ENCODE measurements at regions of chr9 and their contacts with region 1.

Region 1: DNA sequence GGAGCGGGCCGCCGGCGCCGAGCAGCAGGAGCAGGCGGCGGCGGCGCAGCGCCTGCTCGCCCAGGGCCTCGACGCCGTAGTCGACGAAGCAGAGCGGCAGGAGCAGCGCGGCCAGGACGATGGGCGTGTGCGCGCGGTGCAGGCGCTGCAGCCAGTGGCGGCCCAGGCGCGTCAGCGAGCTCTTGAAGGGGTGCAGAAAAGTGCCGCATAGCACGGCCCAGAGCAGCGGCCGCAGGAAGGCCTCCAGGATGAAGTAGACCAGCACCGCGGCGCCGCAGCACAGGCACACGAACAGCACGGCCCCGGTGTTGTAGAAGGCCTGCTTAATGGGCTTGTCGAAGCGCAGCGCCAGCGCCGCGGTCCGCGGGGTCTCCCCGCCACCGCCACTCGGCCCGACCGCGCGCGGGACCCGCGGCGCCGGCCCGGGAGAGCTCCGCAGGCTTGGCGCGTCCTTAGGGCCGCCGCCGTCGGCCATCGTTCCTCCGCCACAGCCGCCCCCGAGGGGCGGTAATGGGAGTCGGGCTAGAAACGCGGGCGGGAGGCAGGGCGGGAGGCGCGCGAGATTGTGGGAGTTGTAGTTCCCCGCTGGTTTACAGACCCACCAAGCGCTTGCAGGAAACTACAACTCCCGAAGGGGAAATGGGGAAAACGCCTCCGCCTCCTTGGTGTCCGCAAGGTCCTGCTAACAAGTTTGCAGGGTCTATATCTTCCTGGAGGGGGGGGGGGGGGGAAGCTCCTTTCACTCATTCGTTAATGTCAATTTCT is at the start of gene TMEM245:
- DNase-seq: peak; percentile 96
- H3K4me3 ChIP-seq: peak within 1 kb of the TSS; percentile 68 to 90
- H3K27ac ChIP-seq: peak within 1 kb of the TSS; percentile 80 to 83
- H3K4me1 ChIP-seq: peaks cover 4% of the 10 kb centered on the region
- H3K27me3 ChIP-seq: no peaks in the 10 kb centered on the region
- CTCF ChIP-seq: peak in 2 of 4 experiments; percentile 16 to 30
- POLR2A ChIP-seq: peak; percentile 94
- total RNA-seq, gene TMEM245: 57.7 to 82.1 TPM

Region 2: DNA sequence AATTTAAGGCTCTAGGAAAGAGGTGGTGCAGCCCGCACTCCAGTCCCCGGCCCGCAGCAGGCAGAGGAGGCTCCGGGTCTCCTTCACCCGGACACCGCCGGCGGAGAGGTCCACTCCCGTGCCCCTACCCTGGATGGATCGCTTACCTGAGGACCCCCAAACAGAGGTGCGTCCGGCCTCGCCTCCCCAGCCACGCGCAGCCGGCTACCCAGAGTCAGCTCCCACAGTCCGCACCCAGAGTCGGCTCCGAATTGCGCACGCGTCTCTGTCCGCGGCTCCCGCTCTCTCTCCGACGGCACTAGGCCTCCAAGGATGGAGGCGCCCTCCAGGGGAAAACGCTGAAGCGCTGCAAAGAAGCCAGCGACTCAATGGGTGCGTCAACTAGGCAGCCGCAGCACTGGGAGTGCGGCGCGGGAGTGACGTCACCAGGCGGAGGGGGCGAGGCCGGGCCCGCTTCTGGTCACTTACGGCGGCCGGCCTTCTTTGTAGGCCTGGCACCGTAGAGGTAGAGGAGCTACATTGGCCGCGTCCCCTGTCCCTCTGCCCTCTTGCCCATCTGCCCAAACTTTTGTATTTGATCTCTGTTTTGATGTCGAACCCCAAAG is 185.8 kb before region 1 on chr9 and contains the start of gene ELP1:
- intact Hi-C with region 1: loop called (anchors 5 kb)
- DNase-seq: peak; percentile 88
- H3K4me3 ChIP-seq: peak within 1 kb of the TSS; percentile 71 to 72
- H3K27ac ChIP-seq: peak within 1 kb of the TSS; percentile 89 to 91
- H3K4me1 ChIP-seq: peaks cover 6% of the 10 kb centered on the region
- H3K27me3 ChIP-seq: no peaks in the 10 kb centered on the region
- CTCF ChIP-seq: peak in 2 of 4 experiments; percentile 13 to 36
- POLR2A ChIP-seq: peak; percentile 43
- total RNA-seq, gene ELP1: 18.4 to 30.3 TPM

Region 3: DNA sequence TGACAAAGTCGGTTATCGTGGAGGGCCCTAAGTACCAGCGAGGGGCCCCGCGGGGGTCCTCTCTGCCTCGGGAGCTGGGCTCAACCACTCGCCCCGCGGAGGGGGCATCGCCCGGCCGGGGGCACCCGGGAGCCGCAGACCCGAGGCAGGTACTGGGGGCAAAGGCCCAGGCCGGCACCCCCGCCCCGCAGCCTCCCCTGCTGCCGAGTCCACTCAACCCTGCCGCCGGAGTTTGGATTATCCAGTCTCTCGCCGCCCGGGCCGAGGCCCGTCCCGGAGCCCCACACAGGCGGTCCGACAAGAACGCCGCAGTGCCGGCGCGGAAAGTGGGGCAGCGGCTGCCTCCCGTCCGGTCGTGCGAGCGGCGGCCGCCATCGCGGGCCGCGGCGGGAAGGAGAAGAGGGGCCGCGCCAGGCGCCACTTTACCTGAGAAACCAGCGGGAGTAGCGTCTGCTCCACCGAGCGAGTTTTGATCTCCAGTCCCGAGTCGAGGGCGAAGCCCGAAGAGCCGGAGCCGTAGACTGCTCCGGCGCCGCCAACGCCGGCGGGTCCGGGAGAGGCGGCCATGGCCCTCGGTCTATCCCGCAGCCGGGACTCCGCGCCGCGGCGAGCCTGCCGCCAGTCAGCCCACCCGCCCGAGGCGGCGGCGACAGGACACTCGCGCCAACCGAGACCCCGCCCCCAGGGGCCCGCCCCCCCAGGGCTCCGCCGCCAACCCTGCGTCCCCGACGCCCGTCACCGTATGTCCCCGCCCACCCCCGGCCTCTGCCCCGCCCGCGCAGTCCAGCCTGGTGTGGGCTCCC is 106.5 kb before region 1 on chr9 and contains the start of gene CTNNAL1:
- intact Hi-C with region 1: loop called (anchors 2 kb)
- DNase-seq: peak; percentile 93
- H3K4me3 ChIP-seq: peak within 1 kb of the TSS; percentile 87
- H3K27ac ChIP-seq: peak within 1 kb of the TSS; percentile 89 to 93
- H3K4me1 ChIP-seq: no peaks in the 10 kb centered on the region
- H3K27me3 ChIP-seq: no peaks in the 10 kb centered on the region
- CTCF ChIP-seq: no peak
- POLR2A ChIP-seq: peak; percentile 88
- total RNA-seq, gene CTNNAL1: 20.2 to 74.6 TPM

Region 4: GRCh38 chr9:109086242-109086641 is 33.4 kb before region 1 on chr9:
- intact Hi-C with region 1: no loop called
- DNase-seq: no peak
- H3K4me3 ChIP-seq: no peak overlapping the region
- H3K27ac ChIP-seq: no peak overlapping the region
- H3K4me1 ChIP-seq: no peaks in the 10 kb centered on the region
- H3K27me3 ChIP-seq: no peaks in the 10 kb centered on the region
- CTCF ChIP-seq: no peak
- POLR2A ChIP-seq: no peak

Region 5: GRCh38 chr9:109182940-109183798 is 63.5 kb after region 1 on chr9:
- intact Hi-C with region 1: loop called (anchors 10 kb)
- DNase-seq: peak; percentile 13
- H3K4me3 ChIP-seq: no peak overlapping the region
- H3K27ac ChIP-seq: no peak overlapping the region
- H3K4me1 ChIP-seq: no peaks in the 10 kb centered on the region
- H3K27me3 ChIP-seq: no peaks in the 10 kb centered on the region
- CTCF ChIP-seq: peak in 3 of 4 experiments; percentile 12 to 23 (median 23)
- POLR2A ChIP-seq: no peak

Measured in prostate gland (tissue), 2 donors.